Caco-2 (cell line): ENCODE measurements at regions of chr2 and their contacts with region 1.

Region 1: DNA sequence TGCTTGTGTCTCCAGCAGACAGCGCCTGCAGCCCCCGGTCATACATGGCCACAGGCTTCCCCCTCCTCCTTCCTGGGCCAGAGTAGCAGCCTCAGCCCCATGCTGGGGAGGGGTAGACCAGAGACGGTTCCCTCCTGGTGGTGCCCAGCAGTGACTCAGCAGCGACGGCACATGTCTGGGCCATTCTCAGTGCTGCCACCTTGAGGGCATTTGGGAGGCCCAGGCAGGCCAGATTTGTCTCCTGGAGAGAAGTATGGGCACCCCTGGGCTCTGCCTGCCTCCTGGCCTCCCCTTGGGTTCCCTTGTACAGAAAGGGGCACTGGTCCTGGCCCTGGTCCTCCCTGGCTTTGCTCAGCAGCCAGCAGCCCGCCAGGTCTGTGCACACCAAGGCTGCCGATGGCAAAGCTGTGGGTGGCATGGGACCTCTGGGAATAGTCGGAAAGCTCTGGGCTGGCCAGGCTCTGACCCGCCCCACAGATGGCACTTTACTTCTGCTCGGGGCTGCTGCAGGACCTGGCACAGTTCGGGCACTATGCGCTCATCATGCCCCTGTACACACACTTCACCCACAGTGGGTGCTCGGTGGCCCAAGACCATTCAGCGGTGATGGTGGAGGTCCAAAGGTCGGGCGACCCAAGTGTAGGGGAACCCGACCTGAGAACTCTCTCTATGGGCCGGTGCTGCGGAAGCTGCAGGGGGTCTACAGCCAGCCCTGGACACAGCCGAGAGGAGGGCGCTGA is 11.4 kb upstream of the ALPI start:
- DNase-seq: peak in 1 of 2 experiments; percentile 47
- H3K4me3 ChIP-seq: no peak overlapping the region
- H3K4me3 Mint-ChIP-seq: no peak overlapping the region
- H3K27ac Mint-ChIP-seq: no peak overlapping the region
- H3K4me1 ChIP-seq: 0 out of 2 replicates have a peak, but pooled peaks cover 4% of the 10 kb centered on the region
- H3K4me1 Mint-ChIP-seq: no peaks in the 10 kb centered on the region
- H3K27me3 ChIP-seq: no peaks in the 10 kb centered on the region
- H3K27me3 Mint-ChIP-seq: no peaks in the 10 kb centered on the region
- CTCF ChIP-seq: peak; percentile 31 to 35

Region 2: DNA sequence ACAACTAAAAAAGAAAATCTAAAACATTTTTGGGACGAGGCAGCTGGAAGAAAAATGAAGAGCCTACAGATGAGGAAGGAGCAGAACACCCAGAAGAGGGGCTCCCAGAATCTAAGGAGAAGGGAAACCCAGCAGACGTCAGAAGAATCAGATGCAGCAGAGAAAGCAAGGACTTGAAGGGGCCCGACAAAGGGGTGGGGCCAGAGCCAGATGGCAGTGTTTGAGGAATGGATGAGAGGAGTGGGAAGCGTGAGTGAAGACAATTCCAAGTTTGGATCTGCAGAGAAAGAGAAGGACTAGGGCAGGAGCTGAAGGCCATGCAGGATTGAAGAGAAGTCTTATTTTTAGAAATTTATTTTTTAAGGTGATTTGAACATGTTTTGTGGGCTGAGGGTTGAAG is 717.0 kb before region 1 on chr2:
- CTCF ChIA-PET with region 1: no interaction called
- POLR2A ChIA-PET with region 1: no interaction called
- intact Hi-C with region 1: no loop called
- DNase-seq: no peak
- H3K4me3 ChIP-seq: no peak overlapping the region
- H3K4me3 Mint-ChIP-seq: no peak overlapping the region
- H3K27ac Mint-ChIP-seq: no peak overlapping the region
- H3K4me1 ChIP-seq: no peaks in the 10 kb centered on the region
- H3K4me1 Mint-ChIP-seq: no peaks in the 10 kb centered on the region
- H3K27me3 ChIP-seq: no peaks in the 10 kb centered on the region
- H3K27me3 Mint-ChIP-seq: no peaks in the 10 kb centered on the region
- CTCF ChIP-seq: no peak

Region 3: GRCh38 chr2:231854671-231855070 is 589.9 kb before region 1 on chr2:
- CTCF ChIA-PET with region 1: no interaction called
- POLR2A ChIA-PET with region 1: no interaction called
- intact Hi-C with region 1: loop called (anchors 5 kb)
- DNase-seq: no peak
- H3K4me3 ChIP-seq: no peak overlapping the region
- H3K4me3 Mint-ChIP-seq: no peak overlapping the region
- H3K27ac Mint-ChIP-seq: no peak overlapping the region
- H3K4me1 ChIP-seq: no peaks in the 10 kb centered on the region
- H3K4me1 Mint-ChIP-seq: no peaks in the 10 kb centered on the region
- H3K27me3 ChIP-seq: no peaks in the 10 kb centered on the region
- H3K27me3 Mint-ChIP-seq: no peaks in the 10 kb centered on the region
- CTCF ChIP-seq: no peak

Region 4: GRCh38 chr2:232521959-232522622 is 77.5 kb after region 1 on chr2:
- CTCF ChIA-PET with region 1: no interaction called
- POLR2A ChIA-PET with region 1: no interaction called
- intact Hi-C with region 1: loop called (anchors 5 kb)
- DNase-seq: peak in 1 of 2 experiments; percentile 66
- H3K4me3 ChIP-seq: no peak overlapping the region; the same call in 1 of the 2 replicates
- H3K4me3 Mint-ChIP-seq: no peak overlapping the region
- H3K27ac Mint-ChIP-seq: no peak overlapping the region
- H3K4me1 ChIP-seq: peaks cover under 1% of the 10 kb centered on the region; the same call in 1 of the 2 replicates
- H3K4me1 Mint-ChIP-seq: peaks cover 3% of the 10 kb centered on the region
- H3K27me3 ChIP-seq: no peaks in the 10 kb centered on the region
- H3K27me3 Mint-ChIP-seq: no peaks in the 10 kb centered on the region
- CTCF ChIP-seq: peak; percentile 33 to 87